ENCODE measurements at regions of chr16 and their contacts with region 1.

Region 1: DNA sequence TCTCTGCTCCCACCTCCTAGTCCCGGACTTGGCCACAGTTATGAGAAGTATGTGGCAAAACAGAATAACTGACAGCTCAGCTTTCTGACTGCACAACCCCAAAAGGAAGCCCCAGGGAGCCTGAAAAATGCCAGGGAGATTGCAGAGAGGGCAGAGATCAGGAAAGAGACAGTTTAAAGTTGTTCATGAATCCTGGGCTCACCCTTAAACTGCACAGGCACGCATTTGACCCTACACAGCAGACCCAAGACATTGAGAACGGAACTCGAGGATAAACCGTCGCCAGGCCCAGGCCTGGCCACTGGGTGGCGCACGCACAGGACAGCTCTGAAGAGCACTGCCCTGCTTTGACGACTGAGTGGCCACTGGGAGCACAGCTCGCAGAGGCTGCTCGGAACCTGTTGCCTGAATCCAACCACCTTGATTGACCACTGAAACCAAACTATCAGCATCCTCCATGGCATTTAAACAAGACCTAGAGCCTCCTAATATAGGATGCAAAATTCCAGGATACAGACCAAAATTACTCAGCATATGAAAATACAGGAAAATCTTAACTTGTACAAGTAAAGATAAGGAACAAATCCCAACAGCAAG is 114.0 kb downstream of the C16orf95 start:
- DNase-seq: peak; percentile 66
- H3K4me3 Mint-ChIP-seq: no peak overlapping the region
- H3K27ac Mint-ChIP-seq: no peak overlapping the region
- H3K4me1 Mint-ChIP-seq: peaks cover 2% of the 10 kb centered on the region
- H3K27me3 Mint-ChIP-seq: peaks cover 10% of the 10 kb centered on the region

Region 2: GRCh38 chr16:87190288-87191230 is 12.6 kb before region 1 on chr16:
- CTCF ChIA-PET with region 1: no interaction called
- POLR2A ChIA-PET with region 1: no interaction called
- intact Hi-C with region 1: no loop called
- DNase-seq: no peak
- H3K4me3 Mint-ChIP-seq: no peak overlapping the region
- H3K27ac Mint-ChIP-seq: no peak overlapping the region
- H3K4me1 Mint-ChIP-seq: no peaks in the 10 kb centered on the region
- H3K27me3 Mint-ChIP-seq: no peaks in the 10 kb centered on the region

Region 3: GRCh38 chr16:87278191-87279095 is 75.3 kb after region 1 on chr16:
- CTCF ChIA-PET with region 1: interaction called, 3 read pairs
- POLR2A ChIA-PET with region 1: no interaction called
- intact Hi-C with region 1: loop called (anchors 1 kb)
- DNase-seq: peak; percentile 67
- H3K4me3 Mint-ChIP-seq: no peak overlapping the region
- H3K27ac Mint-ChIP-seq: no peak overlapping the region
- H3K4me1 Mint-ChIP-seq: peaks cover 5% of the 10 kb centered on the region
- H3K27me3 Mint-ChIP-seq: no peaks in the 10 kb centered on the region

Region 4: GRCh38 chr16:87881324-87882200 is 678.4 kb after region 1 on chr16:
- CTCF ChIA-PET with region 1: no interaction called
- POLR2A ChIA-PET with region 1: no interaction called
- intact Hi-C with region 1: no loop called
- DNase-seq: no peak
- H3K4me3 Mint-ChIP-seq: no peak overlapping the region
- H3K27ac Mint-ChIP-seq: no peak overlapping the region
- H3K4me1 Mint-ChIP-seq: peaks cover 14% of the 10 kb centered on the region
- H3K27me3 Mint-ChIP-seq: peaks cover 2% of the 10 kb centered on the region